Naive thymus-derived CD4-positive, alpha-beta T cell (primary cell): ENCODE measurements at regions of chr19 and their contacts with region 1.

Region 1: DNA sequence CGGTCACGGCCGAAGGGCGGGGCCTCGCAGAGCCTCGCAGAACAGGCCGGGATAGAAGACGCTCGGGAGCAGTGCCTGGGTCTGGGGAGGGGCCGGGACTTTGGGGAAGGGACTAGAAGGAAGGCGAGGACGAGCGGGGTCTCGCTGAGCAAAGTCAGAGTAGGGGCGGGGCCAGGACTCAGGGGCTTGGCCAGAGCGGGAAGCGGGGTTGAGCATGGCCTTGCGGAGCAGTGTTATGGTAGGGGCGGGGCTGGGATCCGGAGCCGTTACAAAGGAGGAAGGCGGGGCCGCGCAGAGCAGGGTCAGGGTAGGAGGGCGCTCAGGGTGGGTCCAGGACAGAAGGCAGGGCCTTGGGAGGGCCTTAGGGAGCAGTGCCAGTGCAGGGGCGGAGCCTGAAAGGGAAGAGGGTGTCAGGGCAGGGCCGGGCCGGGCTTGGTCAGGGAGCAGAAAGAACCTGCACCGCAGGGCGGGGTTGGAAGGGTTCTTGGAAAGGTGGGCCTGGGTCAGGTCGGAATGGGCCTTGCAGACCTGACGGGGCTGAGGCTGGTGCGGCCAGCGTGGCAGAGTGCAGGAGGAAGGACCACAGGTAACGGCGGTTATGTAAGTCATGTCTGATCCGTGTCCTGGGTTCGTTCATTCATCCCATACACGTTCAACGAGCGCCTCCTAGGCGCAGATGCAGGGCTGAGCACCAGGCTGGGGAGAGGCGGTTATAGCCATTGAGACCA is 557 bp upstream of the ATP8B3 start:
- DNase-seq: peak; percentile 70 to 88 (median 84)
- ATAC-seq: peak; percentile 85
- H3K4me3 ChIP-seq: peak overlapping the region; percentile 65
- H3K4me3 Mint-ChIP-seq: peak overlapping the region; percentile 93 to 99 (median 96)
- H3K27ac ChIP-seq: peak overlapping the region; percentile 63
- H3K27ac Mint-ChIP-seq: peak overlapping the region; percentile 82 to 97 (median 92)
- H3K4me1 ChIP-seq: peaks cover 0 to 8% of the 10 kb centered on the region in 2 donors
- H3K4me1 Mint-ChIP-seq: peaks cover 9 to 19% (median 11%) of the 10 kb centered on the region in 7 donors
- H3K27me3 ChIP-seq: no peaks in the 10 kb centered on the region
- H3K27me3 Mint-ChIP-seq: no peaks in the 10 kb centered on the region

Region 2: DNA sequence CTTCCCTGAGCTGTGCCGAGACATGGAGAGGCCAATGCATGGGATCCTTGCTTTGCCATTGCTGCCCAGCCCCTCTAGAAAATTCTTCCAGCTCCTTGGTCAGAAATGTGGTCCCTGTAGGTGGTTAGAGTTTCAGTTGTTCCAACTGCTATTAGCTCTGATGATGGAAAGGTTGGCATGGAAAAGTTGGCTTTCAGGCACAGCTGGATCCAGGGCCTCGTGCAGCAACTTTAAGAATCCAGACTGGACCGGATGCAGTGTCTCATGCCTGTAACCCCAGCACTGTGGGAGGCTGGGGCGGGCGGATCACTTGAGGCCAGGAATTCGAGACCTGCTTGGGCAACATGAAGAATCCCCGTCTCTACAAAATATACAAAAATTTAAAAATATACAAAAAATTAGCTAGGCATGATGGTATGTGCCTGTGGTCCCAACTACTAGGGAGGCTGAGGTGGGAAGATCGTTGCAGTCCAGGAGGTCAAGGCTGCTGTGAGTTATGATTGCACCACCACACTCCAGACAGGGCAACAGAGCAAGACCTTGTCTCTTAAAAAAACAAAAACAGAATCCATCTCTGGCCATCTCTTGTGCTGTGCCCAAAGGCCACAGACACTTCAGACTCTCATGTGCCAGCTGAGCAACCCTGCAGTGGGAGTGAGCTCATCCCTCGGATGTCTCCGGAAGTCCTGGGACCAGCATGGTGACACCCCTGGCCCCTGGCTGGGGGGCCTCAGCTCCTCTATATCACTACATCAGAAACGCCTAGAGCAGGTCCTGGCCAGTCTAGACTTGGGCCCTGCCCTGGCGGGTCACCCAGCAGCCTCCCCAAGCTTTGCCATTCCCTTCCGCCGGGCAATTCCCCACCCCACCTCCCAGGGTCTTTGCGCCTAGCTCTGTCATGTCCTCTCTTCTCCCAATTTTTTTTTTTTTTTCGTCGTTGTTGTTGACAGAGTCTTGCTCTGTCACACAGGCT is 261.3 kb before region 1 on chr19:
- CTCF ChIA-PET with region 1: no interaction called
- POLR2A ChIA-PET with region 1: no interaction called
- intact Hi-C with region 1: loop called in 1 of 2 experiments (anchors 1 kb)
- DNase-seq: no peak
- ATAC-seq: no peak
- H3K4me3 ChIP-seq: no peak overlapping the region
- H3K4me3 Mint-ChIP-seq: no peak overlapping the region
- H3K27ac ChIP-seq: no peak overlapping the region
- H3K27ac Mint-ChIP-seq: peak overlapping the region in 1 of 9 donors; percentile 25
- H3K4me1 ChIP-seq: peaks cover 0 to under 1% of the 10 kb centered on the region in 2 donors
- H3K4me1 Mint-ChIP-seq: peaks cover 0 to 2% (median under 1%) of the 10 kb centered on the region in 7 donors
- H3K27me3 ChIP-seq: no peaks in the 10 kb centered on the region
- H3K27me3 Mint-ChIP-seq: peaks cover 0 to 11% (median 5%) of the 10 kb centered on the region in 5 donors

Region 3: DNA sequence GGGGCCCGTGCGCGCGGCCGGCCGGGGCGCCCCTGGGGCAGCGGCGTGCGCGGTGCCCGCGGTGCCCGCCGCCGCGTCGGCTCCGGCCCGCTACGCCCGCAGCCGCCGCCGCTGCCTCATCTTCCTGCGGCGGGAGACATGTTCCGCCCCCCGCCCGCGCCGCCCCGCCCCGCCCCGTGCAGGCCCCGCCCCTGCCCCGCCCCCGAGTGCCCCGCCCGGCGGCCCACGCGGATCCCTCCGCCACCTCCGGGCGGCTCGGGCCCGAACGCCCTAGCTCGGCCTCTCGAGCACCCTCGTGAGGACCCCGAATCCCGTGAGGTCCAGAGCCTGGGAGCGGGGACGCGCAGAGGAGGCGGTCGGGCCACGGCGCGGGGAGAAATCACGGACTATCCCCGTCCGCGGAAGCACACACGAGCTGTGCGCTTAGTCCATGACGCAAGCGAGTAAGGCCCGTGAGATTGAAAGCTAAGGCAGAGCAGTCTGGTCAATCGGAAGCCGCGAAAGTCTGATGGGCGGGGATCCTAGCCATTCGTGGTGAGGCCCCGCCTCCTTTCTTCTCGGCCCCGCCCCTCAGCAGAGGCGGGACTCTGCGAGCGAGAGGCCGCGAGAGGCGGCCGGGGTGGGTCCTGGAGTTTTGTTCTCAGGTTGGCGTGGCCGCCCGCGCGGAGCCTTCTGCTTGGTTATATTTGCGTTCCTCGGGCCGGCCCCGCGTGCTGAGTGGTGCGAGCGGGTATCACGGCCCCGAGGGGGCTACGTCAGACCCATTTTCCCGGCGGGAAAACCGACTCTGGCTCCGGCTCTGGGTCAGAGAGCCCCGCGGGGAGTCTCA is 159.9 kb before region 1 on chr19 and contains the start of gene TCF3:
- CTCF ChIA-PET with region 1: no interaction called
- POLR2A ChIA-PET with region 1: no interaction called
- intact Hi-C with region 1: loop called (anchors 2 kb)
- DNase-seq: peak; percentile 96 to 100 (median 99)
- ATAC-seq: peak; percentile 96
- H3K4me3 ChIP-seq: peak within 1 kb of the TSS; percentile 86
- H3K4me3 Mint-ChIP-seq: peak within 1 kb of the TSS; percentile 86 to 96 (median 91)
- H3K27ac ChIP-seq: peak within 1 kb of the TSS; percentile 99
- H3K27ac Mint-ChIP-seq: peak within 1 kb of the TSS; percentile 87 to 98 (median 95)
- H3K4me1 ChIP-seq: peaks cover 4 to 8% of the 10 kb centered on the region in 2 donors
- H3K4me1 Mint-ChIP-seq: peaks cover 7 to 14% (median 10%) of the 10 kb centered on the region in 7 donors
- H3K27me3 ChIP-seq: no peaks in the 10 kb centered on the region
- H3K27me3 Mint-ChIP-seq: peaks cover 0 to 4% (median 0%) of the 10 kb centered on the region in 5 donors
- total RNA-seq, gene TCF3: 66.6 to 83.6 (median 78.3) TPM

Region 4: GRCh38 chr19:1789261-1790041 is 23.2 kb before region 1 on chr19:
- CTCF ChIA-PET with region 1: interaction called, 6 read pairs
- POLR2A ChIA-PET with region 1: no interaction called
- intact Hi-C with region 1: loop called (anchors 2 kb)
- DNase-seq: no peak
- ATAC-seq: no peak
- H3K4me3 ChIP-seq: no peak overlapping the region
- H3K4me3 Mint-ChIP-seq: peak overlapping the region in 2 of 10 donors; percentile 5 to 34
- H3K27ac ChIP-seq: no peak overlapping the region
- H3K27ac Mint-ChIP-seq: no peak overlapping the region
- H3K4me1 ChIP-seq: no peaks in the 10 kb centered on the region
- H3K4me1 Mint-ChIP-seq: peaks cover 0 to 2% (median 0%) of the 10 kb centered on the region in 7 donors
- H3K27me3 ChIP-seq: no peaks in the 10 kb centered on the region
- H3K27me3 Mint-ChIP-seq: peaks cover 4 to 15% (median 5%) of the 10 kb centered on the region in 5 donors

Region 5: DNA sequence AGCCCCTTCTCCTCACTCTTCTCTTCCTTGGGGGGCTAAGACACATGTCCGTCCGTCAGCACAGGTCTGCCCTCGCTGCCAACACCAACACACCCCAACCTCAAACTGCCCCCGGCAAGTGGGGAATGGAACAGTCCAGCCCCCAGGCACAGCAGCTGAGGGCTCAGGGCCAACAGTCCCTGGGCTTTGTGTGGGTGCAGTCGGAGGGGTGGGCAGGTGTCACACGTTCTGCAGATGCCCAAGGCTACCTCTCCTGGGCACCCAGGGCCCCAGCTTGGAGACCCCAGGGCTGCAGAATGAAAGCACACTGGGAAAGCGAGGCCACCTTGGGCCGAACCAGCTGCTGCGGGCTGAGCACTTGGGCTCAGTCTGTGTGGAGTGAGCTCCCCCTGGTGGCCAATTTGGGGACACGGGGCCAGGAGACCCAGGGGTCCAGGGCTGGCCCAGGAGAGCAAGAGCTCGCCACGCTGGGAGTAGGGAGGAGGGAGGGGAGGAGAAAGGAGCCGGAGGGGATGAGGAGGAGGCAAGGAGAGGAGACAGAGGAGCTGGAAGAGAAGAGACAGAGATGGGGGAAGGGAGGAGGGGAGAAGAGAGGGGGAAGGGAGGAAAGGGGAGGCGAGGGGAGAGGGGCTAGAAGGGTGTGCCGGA is 13.4 kb after region 1 on chr19:
- CTCF ChIA-PET with region 1: interaction called, 7 read pairs
- POLR2A ChIA-PET with region 1: no interaction called
- intact Hi-C with region 1: loop called in 1 of 2 experiments (anchors 1 kb)
- DNase-seq: peak; percentile 55 to 81 (median 71)
- ATAC-seq: peak; percentile 85
- H3K4me3 ChIP-seq: no peak overlapping the region
- H3K4me3 Mint-ChIP-seq: no peak overlapping the region
- H3K27ac ChIP-seq: no peak overlapping the region
- H3K27ac Mint-ChIP-seq: peak overlapping the region in 2 of 9 donors; percentile 5 to 71
- H3K4me1 ChIP-seq: peaks cover 3 to 6% of the 10 kb centered on the region in 2 donors
- H3K4me1 Mint-ChIP-seq: peaks cover 0 to 5% (median 0%) of the 10 kb centered on the region in 7 donors
- H3K27me3 ChIP-seq: no peaks in the 10 kb centered on the region
- H3K27me3 Mint-ChIP-seq: no peaks in the 10 kb centered on the region

Region 6: GRCh38 chr19:1848399-1849131 is 35.9 kb after region 1 on chr19 and contains the start of gene REXO1:
- CTCF ChIA-PET with region 1: no interaction called
- POLR2A ChIA-PET with region 1: no interaction called
- intact Hi-C with region 1: loop called (anchors 1 kb)
- DNase-seq: peak; percentile 96 to 100 (median 98)
- ATAC-seq: peak; percentile 90
- H3K4me3 ChIP-seq: peak within 1 kb of the TSS; percentile 85
- H3K4me3 Mint-ChIP-seq: peak within 1 kb of the TSS; percentile 83 to 95 (median 91)
- H3K27ac ChIP-seq: peak within 1 kb of the TSS; percentile 99
- H3K27ac Mint-ChIP-seq: peak within 1 kb of the TSS; percentile 85 to 95 (median 93)
- H3K4me1 ChIP-seq: peaks cover 30 to 67% of the 10 kb centered on the region in 2 donors
- H3K4me1 Mint-ChIP-seq: peaks cover 36 to 72% (median 52%) of the 10 kb centered on the region in 7 donors
- H3K27me3 ChIP-seq: no peaks in the 10 kb centered on the region
- H3K27me3 Mint-ChIP-seq: no peaks in the 10 kb centered on the region
- total RNA-seq, gene REXO1: 52.7 to 92.6 (median 73.1) TPM

Region 7: DNA sequence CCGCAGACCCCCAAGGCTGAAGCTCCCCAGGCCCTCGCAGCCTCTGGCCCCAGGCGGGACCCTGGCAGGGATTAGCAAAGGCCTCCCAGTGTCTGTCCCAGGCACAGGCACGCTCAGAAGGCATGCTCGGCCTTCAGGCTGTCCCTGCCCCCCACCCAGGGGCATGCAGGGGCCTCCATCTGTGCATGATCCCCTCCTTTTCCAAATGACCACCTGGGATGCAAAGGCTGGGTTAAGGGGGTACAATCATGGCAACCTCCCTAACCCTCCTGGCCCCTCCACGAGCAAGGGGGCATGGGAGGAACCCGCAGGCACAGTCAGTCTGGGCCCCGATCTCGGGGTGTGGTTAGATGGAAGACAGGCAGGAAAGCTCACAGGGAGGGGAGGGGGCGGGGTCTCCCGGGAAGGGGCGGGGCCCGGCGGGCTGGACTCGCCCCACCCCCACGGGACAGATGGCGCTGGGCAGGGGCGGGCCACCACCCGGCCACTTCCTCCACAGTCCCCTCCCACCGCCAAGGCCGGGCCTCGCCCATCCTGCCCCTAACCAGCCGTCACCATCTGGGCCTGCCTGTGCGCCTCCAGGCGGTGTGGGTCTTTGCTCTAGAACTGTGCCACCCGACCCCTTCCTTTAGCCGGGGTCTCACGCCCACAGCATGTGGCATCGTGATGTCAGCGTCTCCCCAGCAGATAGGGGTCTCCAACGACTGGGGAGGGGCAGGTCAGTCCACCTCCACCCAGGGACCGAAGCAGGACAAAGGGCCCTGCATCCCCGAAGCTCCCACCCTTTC is 42.6 kb after region 1 on chr19:
- CTCF ChIA-PET with region 1: no interaction called
- POLR2A ChIA-PET with region 1: no interaction called
- intact Hi-C with region 1: loop called in 1 of 2 experiments (anchors 1 kb)
- DNase-seq: peak; percentile 58 to 89 (median 73)
- ATAC-seq: peak; percentile 78
- H3K4me3 ChIP-seq: peak overlapping the region; percentile 84
- H3K4me3 Mint-ChIP-seq: peak overlapping the region; percentile 79 to 91 (median 87)
- H3K27ac ChIP-seq: peak overlapping the region; percentile 93
- H3K27ac Mint-ChIP-seq: peak overlapping the region; percentile 82 to 96 (median 91)
- H3K4me1 ChIP-seq: peaks cover 28 to 76% of the 10 kb centered on the region in 2 donors
- H3K4me1 Mint-ChIP-seq: peaks cover 11 to 66% (median 51%) of the 10 kb centered on the region in 7 donors
- H3K27me3 ChIP-seq: no peaks in the 10 kb centered on the region
- H3K27me3 Mint-ChIP-seq: no peaks in the 10 kb centered on the region